Activated T-helper 1 cell treated with anti-CD3 and anti-CD28 coated beads, Interleukin-12 subunit alpha, Interleukin-12 subunit beta, Interleukin-2, Interleukin-4 antibody, amounts not matched to agents 30 ng/mL and 10 ng/mL and 1 ng/mL, durations not matched to agents 14 hours and 24 hours and 36 hours (primary cell): ENCODE measurements at regions of chr17 and their contacts with region 1.

Region 1: DNA sequence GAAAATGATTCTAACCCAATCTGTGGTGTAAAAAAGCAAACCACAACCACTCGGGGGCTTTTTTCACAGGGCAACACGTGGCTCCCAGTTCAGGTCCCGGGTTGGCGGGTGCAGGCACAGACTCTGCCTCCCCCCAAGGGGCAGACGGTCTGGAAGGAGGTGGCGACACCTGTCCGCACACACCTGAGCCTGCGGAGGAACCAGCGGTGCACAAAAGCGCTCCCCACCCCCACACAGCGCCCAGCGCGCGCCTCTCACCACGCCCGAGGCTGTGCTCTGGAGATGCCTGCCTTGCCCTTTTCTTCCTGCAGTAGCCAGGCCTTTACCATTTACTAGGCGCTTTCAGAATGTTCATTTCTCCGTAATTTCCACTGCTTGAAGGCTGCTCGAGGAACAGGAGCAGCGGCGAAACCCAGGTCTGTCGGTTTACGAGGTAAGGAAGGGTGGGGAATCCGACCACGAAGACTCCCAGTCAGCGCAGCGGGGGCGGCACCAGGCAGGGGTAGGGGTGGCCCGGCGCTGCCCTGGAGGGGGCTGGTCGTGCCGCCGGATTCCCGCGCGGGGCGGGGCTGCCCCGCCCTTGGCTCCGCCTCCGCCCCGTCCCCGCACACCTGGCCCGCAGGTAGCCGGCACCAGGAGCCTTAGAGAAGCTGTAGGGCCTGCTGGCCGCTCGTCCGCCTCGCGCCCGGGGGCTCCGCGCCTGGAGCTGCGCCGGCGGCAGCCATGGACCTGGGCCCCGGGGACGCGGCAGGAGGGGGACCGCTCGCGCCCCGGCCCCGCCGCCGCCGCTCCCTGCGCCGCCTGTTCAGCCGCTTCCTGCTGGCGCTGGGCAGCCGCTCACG is at the start of gene USP43:
- DNase-seq: no peak
- H3K4me3 Mint-ChIP-seq: peak within 1 kb of the TSS; percentile 72
- H3K27ac Mint-ChIP-seq: no peak within 1 kb of the TSS
- H3K4me1 Mint-ChIP-seq: peaks cover 18% of the 10 kb centered on the region
- H3K27me3 Mint-ChIP-seq: peaks cover 40% of the 10 kb centered on the region
- total RNA-seq, gene USP43: not detected in 2 replicates

Region 2: DNA sequence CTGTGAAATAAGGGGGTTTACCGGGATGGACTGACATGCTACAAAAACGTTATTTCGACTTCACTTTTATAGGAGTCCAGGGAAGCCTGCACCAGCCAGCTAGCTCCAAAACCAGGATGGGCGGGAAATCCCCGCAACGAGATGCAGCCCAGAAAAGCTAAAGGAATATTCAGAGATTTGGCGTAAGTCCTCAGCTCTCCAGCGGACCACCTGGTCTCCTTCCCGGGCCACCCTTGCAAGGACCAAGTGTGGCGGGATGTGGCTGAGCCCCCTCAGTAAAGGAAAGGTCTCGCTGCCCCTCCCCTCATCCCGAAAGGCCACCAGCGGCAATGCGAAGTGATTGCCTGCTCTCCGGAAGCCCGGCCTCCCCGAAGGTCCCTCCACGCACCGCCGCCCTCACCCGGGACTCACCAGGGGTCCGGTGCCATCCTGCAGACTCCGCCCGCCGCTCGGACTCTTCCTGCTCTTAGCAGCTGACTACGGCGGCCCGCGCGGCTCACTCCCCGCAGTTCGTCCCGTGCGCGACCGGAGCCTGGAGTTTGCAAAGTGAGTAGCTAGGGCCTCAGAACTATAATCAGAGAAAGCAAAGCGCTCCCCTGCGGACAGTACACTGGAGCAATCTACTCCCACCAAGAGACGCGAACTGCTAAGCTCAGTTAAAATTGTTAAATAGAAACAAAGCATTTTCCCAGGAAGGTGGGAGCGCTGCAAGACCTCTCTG is 69.6 kb before region 1 on chr17 and contains the start of gene STX8:
- intact Hi-C with region 1: loop called (anchors 2 kb)
- DNase-seq: peak; percentile 74
- H3K4me3 Mint-ChIP-seq: peak within 1 kb of the TSS; percentile 99
- H3K27ac Mint-ChIP-seq: peak within 1 kb of the TSS; percentile 83
- H3K4me1 Mint-ChIP-seq: peaks cover 18% of the 10 kb centered on the region
- H3K27me3 Mint-ChIP-seq: no peaks in the 10 kb centered on the region
- total RNA-seq, gene STX8: 45.4 and 47.2 TPM in 2 replicates

Region 3: GRCh38 chr17:9729034-9729650 is 84.0 kb after region 1 on chr17:
- intact Hi-C with region 1: no loop called
- DNase-seq: no peak
- H3K4me3 Mint-ChIP-seq: no peak overlapping the region
- H3K27ac Mint-ChIP-seq: no peak overlapping the region
- H3K4me1 Mint-ChIP-seq: no peaks in the 10 kb centered on the region
- H3K27me3 Mint-ChIP-seq: peaks cover 1% of the 10 kb centered on the region